BJ (cell line): ENCODE measurements at regions of chr12 and their contacts with region 1.

Region 1: DNA sequence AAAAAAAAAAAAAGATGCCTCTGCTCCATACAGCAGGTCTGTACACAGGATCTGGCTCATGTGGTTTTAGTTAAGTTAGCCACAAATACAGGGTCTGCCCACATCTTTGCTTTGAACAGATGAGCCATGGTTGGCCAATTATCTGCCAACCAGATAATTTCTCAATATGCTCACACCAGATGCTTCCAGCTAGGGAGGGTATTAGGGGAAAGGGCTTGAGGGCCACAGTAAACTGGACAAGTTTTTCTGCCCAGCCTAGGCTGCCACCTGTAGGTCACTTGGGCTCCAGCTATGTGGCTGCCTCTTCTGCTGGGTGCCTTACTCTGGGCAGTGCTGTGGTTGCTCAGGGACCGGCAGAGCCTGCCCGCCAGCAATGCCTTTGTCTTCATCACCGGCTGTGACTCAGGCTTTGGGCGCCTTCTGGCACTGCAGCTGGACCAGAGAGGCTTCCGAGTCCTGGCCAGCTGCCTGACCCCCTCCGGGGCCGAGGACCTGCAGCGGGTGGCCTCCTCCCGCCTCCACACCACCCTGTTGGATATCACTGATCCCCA is 776 bp downstream of the RDH5 start:
- DNase-seq: no peak
- H3K4me3 ChIP-seq: no peak overlapping the region
- H3K27me3 ChIP-seq: no peaks in the 10 kb centered on the region
- CTCF ChIP-seq: peak; percentile 69

Region 2: DNA sequence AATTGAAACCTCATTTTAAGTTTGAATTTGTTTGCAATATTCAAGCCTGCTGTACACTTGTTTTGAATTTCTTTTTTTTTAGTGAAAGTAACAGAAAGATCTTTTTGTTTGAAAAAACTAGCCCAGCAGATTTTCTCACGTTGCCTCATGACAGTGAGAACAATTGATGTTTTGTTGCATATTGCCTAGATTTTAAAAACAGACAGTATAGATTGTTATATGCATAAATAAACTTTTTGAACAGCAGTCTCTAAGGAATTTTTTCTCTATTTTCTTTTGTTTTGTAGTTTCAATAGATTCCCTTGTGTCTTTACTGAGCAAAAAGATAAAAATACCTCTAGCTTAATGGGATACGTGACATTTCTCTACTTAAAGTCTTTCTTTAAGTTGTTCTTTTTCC is 440.0 kb before region 1 on chr12:
- CTCF ChIA-PET with region 1: no interaction called
- POLR2A ChIA-PET with region 1: no interaction called
- DNase-seq: no peak
- H3K4me3 ChIP-seq: no peak overlapping the region
- H3K27me3 ChIP-seq: no peaks in the 10 kb centered on the region
- CTCF ChIP-seq: no peak

Region 3: DNA sequence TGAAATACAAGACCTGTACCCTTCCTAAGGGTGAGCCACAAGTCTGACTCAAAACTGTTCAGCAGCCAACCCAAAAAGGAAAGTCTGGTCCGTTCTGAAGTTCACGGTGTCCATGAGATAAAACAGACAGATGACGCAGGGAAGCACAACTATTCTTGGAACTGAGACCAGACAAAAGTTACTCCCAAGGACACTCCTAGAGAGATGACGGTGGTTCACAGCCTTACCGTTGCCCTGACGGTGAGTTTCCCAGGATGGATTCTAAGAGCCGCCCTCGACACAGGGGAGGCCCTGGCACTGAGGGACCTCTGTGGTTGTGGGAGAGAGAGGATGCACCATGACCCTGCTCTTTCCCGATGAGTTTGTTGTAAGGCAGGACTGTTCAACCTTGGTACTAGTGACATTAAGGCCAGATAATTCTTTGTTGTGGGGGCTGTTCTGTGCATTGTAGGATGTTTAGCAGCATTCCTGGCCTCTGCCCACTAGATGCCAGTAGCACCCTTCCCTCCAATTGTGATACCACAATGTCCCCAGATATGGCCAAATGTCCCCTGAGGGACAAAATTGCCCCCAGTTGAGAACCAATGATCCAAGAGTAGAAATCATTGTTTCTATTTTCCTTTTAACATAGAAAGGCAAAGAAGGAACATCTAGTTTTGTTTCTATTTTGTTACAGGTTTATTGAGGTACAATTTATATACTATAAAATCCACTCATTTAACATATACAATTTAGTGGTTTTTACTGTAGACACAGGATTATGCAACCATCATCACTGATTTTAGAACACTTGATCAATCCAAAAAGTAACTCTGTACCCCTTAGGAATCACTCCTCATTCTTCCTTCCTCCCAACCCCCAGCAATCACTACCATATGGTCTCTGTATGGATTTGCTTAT is 61.2 kb before region 1 on chr12:
- CTCF ChIA-PET with region 1: interaction called, 22 read pairs
- POLR2A ChIA-PET with region 1: no interaction called
- DNase-seq: no peak
- H3K4me3 ChIP-seq: no peak overlapping the region
- H3K27me3 ChIP-seq: peaks cover 9% of the 10 kb centered on the region
- CTCF ChIP-seq: peak; percentile 46; the same call in 1 of the 2 replicates

Region 4: DNA sequence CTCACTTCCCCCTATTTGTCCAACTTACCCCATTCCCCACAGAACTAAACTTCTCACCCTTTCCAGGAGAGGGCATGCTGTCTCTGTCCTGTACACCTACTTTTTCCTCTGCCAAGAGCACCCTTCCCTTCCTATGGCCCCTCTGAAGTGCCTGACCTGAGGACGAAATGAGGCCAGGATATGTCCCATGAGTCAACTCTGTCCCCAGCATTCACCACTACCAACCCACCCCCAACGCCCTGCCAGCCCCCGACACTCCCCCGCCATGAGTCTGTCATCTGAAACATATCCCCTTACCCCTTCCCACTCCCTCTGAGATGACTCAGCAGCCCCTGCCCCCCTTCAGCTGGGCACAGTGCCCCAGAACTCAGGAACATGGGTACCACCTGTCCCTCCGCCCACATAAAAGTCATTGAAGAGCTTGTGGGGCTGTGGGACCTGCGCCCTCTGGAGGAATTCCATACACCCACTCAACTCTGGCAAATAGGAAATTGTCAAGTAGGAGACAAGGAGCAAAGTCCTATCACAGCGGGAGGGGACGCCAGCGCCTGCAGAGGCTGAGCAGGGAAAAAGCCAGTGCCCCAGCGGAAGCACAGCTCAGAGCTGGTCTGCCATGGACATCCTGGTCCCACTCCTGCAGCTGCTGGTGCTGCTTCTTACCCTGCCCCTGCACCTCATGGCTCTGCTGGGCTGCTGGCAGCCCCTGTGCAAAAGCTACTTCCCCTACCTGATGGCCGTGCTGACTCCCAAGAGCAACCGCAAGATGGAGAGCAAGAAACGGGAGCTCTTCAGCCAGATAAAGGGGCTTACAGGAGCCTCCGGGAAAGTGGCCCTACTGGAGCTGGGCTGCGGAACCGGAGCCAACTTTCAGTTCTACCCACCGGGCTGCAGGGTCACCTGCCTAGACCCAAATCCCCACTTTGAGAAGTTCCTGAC is 39.6 kb before region 1 on chr12:
- CTCF ChIA-PET with region 1: interaction called, 24 read pairs
- POLR2A ChIA-PET with region 1: no interaction called
- DNase-seq: no peak
- H3K4me3 ChIP-seq: no peak overlapping the region
- H3K27me3 ChIP-seq: no peaks in the 10 kb centered on the region; the same call in 1 of the 2 replicates
- CTCF ChIP-seq: peak; percentile 48

Region 5: GRCh38 chr12:55705782-55706402 is 15.1 kb before region 1 on chr12:
- CTCF ChIA-PET with region 1: interaction called, 13 read pairs
- POLR2A ChIA-PET with region 1: interaction called, 3 read pairs
- DNase-seq: no peak
- H3K4me3 ChIP-seq: no peak overlapping the region
- H3K27me3 ChIP-seq: 0 out of 2 replicates have a peak, but pooled peaks cover 2% of the 10 kb centered on the region
- CTCF ChIP-seq: peak; percentile 35

Region 6: GRCh38 chr12:55745361-55746146 is 24.6 kb after region 1 on chr12:
- CTCF ChIA-PET with region 1: interaction called, 3 read pairs
- POLR2A ChIA-PET with region 1: interaction called, 12 read pairs
- DNase-seq: no peak
- H3K4me3 ChIP-seq: no peak overlapping the region
- H3K27me3 ChIP-seq: no peaks in the 10 kb centered on the region
- CTCF ChIP-seq: no peak

Region 7: GRCh38 chr12:55771736-55772135 is 50.8 kb after region 1 on chr12:
- CTCF ChIA-PET with region 1: no interaction called
- POLR2A ChIA-PET with region 1: no interaction called
- DNase-seq: no peak
- H3K4me3 ChIP-seq: no peak overlapping the region
- H3K27me3 ChIP-seq: no peaks in the 10 kb centered on the region
- CTCF ChIP-seq: no peak